B cell (primary cell): ENCODE measurements at regions of chr14 and their contacts with region 1.

Region 1: GRCh38 chr14:29799464-29800095 is 128.1 kb downstream of the PRKD1 start:
- DNase-seq: peak; percentile 26
- ATAC-seq: peak; percentile 84
- H3K4me3 ChIP-seq: no peak overlapping the region
- H3K4me3 Mint-ChIP-seq: peak overlapping the region; percentile 69
- H3K27ac ChIP-seq: no peak overlapping the region
- H3K27ac Mint-ChIP-seq: no peak overlapping the region
- H3K4me1 ChIP-seq: no peaks in the 10 kb centered on the region
- H3K4me1 Mint-ChIP-seq: peaks cover 17% of the 10 kb centered on the region
- H3K27me3 ChIP-seq: no peaks in the 10 kb centered on the region
- H3K27me3 Mint-ChIP-seq: no peaks in the 10 kb centered on the region
- CTCF ChIP-seq: no peak

Region 2: DNA sequence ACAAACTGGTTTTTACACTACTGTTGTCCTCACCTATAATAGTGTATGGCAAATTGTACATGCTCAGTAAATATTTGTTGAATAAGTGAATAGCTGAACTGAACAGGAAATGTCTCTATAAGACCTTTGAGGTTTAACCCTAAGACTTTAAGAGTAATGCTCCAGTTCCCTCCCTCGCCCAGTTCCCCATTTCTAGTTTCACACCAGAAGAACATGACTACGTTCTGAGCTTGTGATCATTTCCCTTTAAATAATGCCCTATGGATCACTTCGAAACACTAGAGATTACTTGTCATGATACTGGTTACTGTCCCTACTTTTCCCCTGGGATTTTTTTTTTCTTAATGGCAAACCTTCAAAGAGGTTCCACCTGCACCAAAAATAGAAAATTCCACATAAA is 58.7 kb after region 1 on chr14:
- CTCF ChIA-PET with region 1: no interaction called
- POLR2A ChIA-PET with region 1: no interaction called
- intact Hi-C with region 1: loop called (anchors 5 kb)
- DNase-seq: peak; percentile 63
- ATAC-seq: peak; percentile 84
- H3K4me3 ChIP-seq: peak overlapping the region in 1 of 5 experiments; percentile 9
- H3K4me3 Mint-ChIP-seq: peak overlapping the region; percentile 73
- H3K27ac ChIP-seq: peak overlapping the region in 1 of 2 donors; percentile 74
- H3K27ac Mint-ChIP-seq: peak overlapping the region; percentile 90
- H3K4me1 ChIP-seq: peaks cover 9 to 20% of the 10 kb centered on the region in 2 donors
- H3K4me1 Mint-ChIP-seq: peaks cover 39% of the 10 kb centered on the region
- H3K27me3 ChIP-seq: no peaks in the 10 kb centered on the region
- H3K27me3 Mint-ChIP-seq: no peaks in the 10 kb centered on the region
- CTCF ChIP-seq: no peak

Region 3: GRCh38 chr14:30005114-30005808 is 205.7 kb after region 1 on chr14:
- CTCF ChIA-PET with region 1: no interaction called
- POLR2A ChIA-PET with region 1: no interaction called
- intact Hi-C with region 1: loop called (anchors 1 kb)
- DNase-seq: peak; percentile 25
- ATAC-seq: no peak
- H3K4me3 ChIP-seq: no peak overlapping the region
- H3K4me3 Mint-ChIP-seq: no peak overlapping the region
- H3K27ac ChIP-seq: no peak overlapping the region
- H3K27ac Mint-ChIP-seq: no peak overlapping the region
- H3K4me1 ChIP-seq: no peaks in the 10 kb centered on the region
- H3K4me1 Mint-ChIP-seq: no peaks in the 10 kb centered on the region
- H3K27me3 ChIP-seq: no peaks in the 10 kb centered on the region
- H3K27me3 Mint-ChIP-seq: no peaks in the 10 kb centered on the region
- CTCF ChIP-seq: peak; percentile 76